MCF 10A (cell line): ENCODE measurements at regions of chr12 and their contacts with region 1.

Region 1: GRCh38 chr12:76259660-76260389 is 88.4 kb downstream of the BBS10 start:
- DNase-seq: peak; percentile 72
- H3K4me3 Mint-ChIP-seq: peak overlapping the region; percentile 65
- H3K27ac Mint-ChIP-seq: peak overlapping the region; percentile 50
- H3K4me1 Mint-ChIP-seq: peaks cover 24% of the 10 kb centered on the region
- H3K27me3 Mint-ChIP-seq: no peaks in the 10 kb centered on the region
- CTCF ChIP-seq: no peak

Region 2: DNA sequence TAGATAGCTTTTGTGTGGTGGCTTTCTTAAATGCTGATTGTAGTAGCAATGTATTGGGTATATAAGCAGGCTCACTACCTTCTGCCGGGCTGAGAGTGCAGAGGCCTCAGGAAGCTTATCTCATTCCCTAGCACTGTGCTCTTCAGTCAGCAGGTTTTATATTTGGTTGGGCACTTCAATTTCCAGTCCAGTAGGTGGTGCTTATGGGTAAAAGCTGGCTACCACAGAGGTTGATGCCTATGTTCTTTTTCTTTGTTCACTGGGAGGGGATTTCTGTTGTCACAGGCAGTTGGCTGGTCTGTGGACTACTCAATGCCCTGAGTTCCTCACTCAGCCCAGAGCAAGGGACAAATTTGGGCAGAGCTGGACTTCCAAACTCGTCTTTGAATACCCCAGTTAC is 822.3 kb before region 1 on chr12:
- CTCF ChIA-PET with region 1: no interaction called
- POLR2A ChIA-PET with region 1: no interaction called
- intact Hi-C with region 1: no loop called
- DNase-seq: peak; percentile 19
- H3K4me3 Mint-ChIP-seq: no peak overlapping the region
- H3K27ac Mint-ChIP-seq: no peak overlapping the region
- H3K4me1 Mint-ChIP-seq: no peaks in the 10 kb centered on the region
- H3K27me3 Mint-ChIP-seq: no peaks in the 10 kb centered on the region
- CTCF ChIP-seq: peak; percentile 14

Region 3: GRCh38 chr12:75944097-75944904 is 315.5 kb before region 1 on chr12:
- CTCF ChIA-PET with region 1: no interaction called
- POLR2A ChIA-PET with region 1: no interaction called
- intact Hi-C with region 1: no loop called
- DNase-seq: peak; percentile 78
- H3K4me3 Mint-ChIP-seq: peak overlapping the region; percentile 12
- H3K27ac Mint-ChIP-seq: peak overlapping the region; percentile 90
- H3K4me1 Mint-ChIP-seq: peaks cover 15% of the 10 kb centered on the region
- H3K27me3 Mint-ChIP-seq: no peaks in the 10 kb centered on the region
- CTCF ChIP-seq: no peak

Region 4: GRCh38 chr12:76055393-76055792 is 204.4 kb before region 1 on chr12:
- CTCF ChIA-PET with region 1: no interaction called
- POLR2A ChIA-PET with region 1: no interaction called
- intact Hi-C with region 1: no loop called
- DNase-seq: no peak
- H3K4me3 Mint-ChIP-seq: no peak overlapping the region
- H3K27ac Mint-ChIP-seq: no peak overlapping the region
- H3K4me1 Mint-ChIP-seq: no peaks in the 10 kb centered on the region
- H3K27me3 Mint-ChIP-seq: no peaks in the 10 kb centered on the region
- CTCF ChIP-seq: no peak

Region 5: GRCh38 chr12:76206677-76207072 is 53.1 kb before region 1 on chr12:
- CTCF ChIA-PET with region 1: no interaction called
- POLR2A ChIA-PET with region 1: no interaction called
- intact Hi-C with region 1: no loop called
- DNase-seq: no peak
- H3K4me3 Mint-ChIP-seq: no peak overlapping the region
- H3K27ac Mint-ChIP-seq: no peak overlapping the region
- H3K4me1 Mint-ChIP-seq: no peaks in the 10 kb centered on the region
- H3K27me3 Mint-ChIP-seq: no peaks in the 10 kb centered on the region
- CTCF ChIP-seq: no peak

Region 6: DNA sequence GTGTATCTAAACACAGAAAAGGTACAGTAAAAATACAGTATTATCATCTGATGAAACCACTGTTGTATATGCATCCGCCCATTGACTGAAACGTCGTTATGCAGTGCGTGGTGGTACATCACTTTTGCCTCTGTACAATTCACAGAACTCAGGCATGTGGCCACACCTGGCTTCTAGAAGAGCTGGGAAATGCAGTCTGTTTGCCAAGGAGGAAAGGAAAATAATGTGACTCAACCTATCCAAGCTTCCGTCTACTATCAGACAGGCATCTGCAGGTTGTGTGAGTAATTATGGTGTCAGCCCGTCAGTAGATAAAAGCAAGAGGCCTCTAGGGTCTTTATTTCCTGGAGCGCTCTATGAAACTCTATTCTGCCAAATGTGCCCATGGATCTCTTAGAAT is 23.2 kb before region 1 on chr12:
- CTCF ChIA-PET with region 1: interaction called, 3 read pairs
- POLR2A ChIA-PET with region 1: interaction called, 24 read pairs
- intact Hi-C with region 1: no loop called
- DNase-seq: peak; percentile 90
- H3K4me3 Mint-ChIP-seq: no peak overlapping the region
- H3K27ac Mint-ChIP-seq: peak overlapping the region; percentile 67
- H3K4me1 Mint-ChIP-seq: peaks cover 24% of the 10 kb centered on the region
- H3K27me3 Mint-ChIP-seq: no peaks in the 10 kb centered on the region
- CTCF ChIP-seq: no peak

Region 7: GRCh38 chr12:76272287-76272686 is 12.5 kb after region 1 on chr12:
- CTCF ChIA-PET with region 1: interaction called, 4 read pairs
- POLR2A ChIA-PET with region 1: interaction called, 13 read pairs
- intact Hi-C with region 1: no loop called
- DNase-seq: no peak
- H3K4me3 Mint-ChIP-seq: no peak overlapping the region
- H3K27ac Mint-ChIP-seq: no peak overlapping the region
- H3K4me1 Mint-ChIP-seq: peaks cover 50% of the 10 kb centered on the region
- H3K27me3 Mint-ChIP-seq: no peaks in the 10 kb centered on the region
- CTCF ChIP-seq: no peak